CD4-positive, alpha-beta T cell (primary cell): ENCODE measurements at regions of chr10 and their contacts with region 1.

Region 1: GRCh38 chr10:83410586-83410985 is 728.7 kb upstream of the GHITM start:
- DNase-seq: no peak
- ATAC-seq: no peak
- H3K4me3 ChIP-seq: no peak overlapping the region
- H3K4me3 Mint-ChIP-seq: no peak overlapping the region
- H3K27ac ChIP-seq: no peak overlapping the region
- H3K27ac Mint-ChIP-seq: no peak overlapping the region
- H3K4me1 ChIP-seq: no peaks in the 10 kb centered on the region
- H3K4me1 Mint-ChIP-seq: no peaks in the 10 kb centered on the region
- H3K27me3 ChIP-seq: no peaks in the 10 kb centered on the region
- H3K27me3 Mint-ChIP-seq: no peaks in the 10 kb centered on the region
- CTCF ChIP-seq: no peak

Region 2: GRCh38 chr10:83212632-83213334 is 197.8 kb before region 1 on chr10:
- CTCF ChIA-PET with region 1: no interaction called
- POLR2A ChIA-PET with region 1: no interaction called
- intact Hi-C with region 1: loop called in 1 of 2 experiments (anchors 10 kb)
- DNase-seq: no peak
- ATAC-seq: no peak
- H3K4me3 ChIP-seq: no peak overlapping the region
- H3K4me3 Mint-ChIP-seq: no peak overlapping the region
- H3K27ac ChIP-seq: no peak overlapping the region
- H3K27ac Mint-ChIP-seq: no peak overlapping the region
- H3K4me1 ChIP-seq: no peaks in the 10 kb centered on the region
- H3K4me1 Mint-ChIP-seq: no peaks in the 10 kb centered on the region
- H3K27me3 ChIP-seq: no peaks in the 10 kb centered on the region
- H3K27me3 Mint-ChIP-seq: no peaks in the 10 kb centered on the region
- CTCF ChIP-seq: no peak

Region 3: DNA sequence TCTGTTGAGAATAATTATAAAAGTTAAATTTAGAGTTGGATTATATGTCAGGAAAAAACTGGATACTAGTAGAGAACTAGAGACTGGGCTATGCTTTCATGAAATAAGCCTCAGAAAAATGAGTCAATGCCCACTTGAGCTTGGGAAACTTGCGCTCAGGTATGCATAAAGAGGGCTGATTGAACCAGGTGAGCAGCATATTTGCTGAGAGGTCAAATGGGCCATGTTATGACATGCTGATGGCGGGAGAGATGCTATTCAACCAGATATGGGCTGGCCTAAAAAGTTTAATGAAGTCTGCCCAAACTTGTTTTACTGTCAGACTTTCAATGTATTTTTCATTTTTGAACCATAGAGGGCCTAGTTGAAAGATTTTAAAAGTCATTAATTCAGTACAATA is 108.9 kb before region 1 on chr10:
- CTCF ChIA-PET with region 1: no interaction called
- POLR2A ChIA-PET with region 1: no interaction called
- intact Hi-C with region 1: no loop called
- DNase-seq: no peak
- ATAC-seq: no peak
- H3K4me3 ChIP-seq: no peak overlapping the region
- H3K4me3 Mint-ChIP-seq: no peak overlapping the region
- H3K27ac ChIP-seq: no peak overlapping the region
- H3K27ac Mint-ChIP-seq: no peak overlapping the region
- H3K4me1 ChIP-seq: no peaks in the 10 kb centered on the region
- H3K4me1 Mint-ChIP-seq: no peaks in the 10 kb centered on the region
- H3K27me3 ChIP-seq: no peaks in the 10 kb centered on the region
- H3K27me3 Mint-ChIP-seq: no peaks in the 10 kb centered on the region
- CTCF ChIP-seq: no peak